CD4-positive, alpha-beta T cell (primary cell): ENCODE measurements at regions of chr11 and their contacts with region 1.

Region 1: DNA sequence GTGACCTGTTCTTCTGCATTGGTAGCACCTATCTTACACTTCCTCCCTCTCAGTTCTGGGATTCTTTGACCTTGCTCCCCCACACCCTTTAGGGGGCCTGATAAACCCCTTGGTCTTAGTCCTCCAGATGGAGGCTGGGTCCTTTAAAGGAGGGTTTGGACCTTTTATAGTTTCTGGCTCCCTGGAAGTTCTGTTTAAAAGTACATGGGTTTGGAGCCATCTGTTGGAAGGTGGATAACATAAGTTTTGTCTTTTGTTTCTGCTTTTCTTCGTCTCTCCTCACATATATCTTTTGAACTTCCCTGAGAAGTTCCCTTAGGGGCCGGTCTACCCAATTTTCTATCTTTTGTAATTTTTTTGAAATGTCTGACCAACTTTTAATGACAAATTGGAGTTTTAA is 17.9 kb upstream of the HYLS1 start:
- DNase-seq: no peak
- ATAC-seq: no peak
- H3K4me3 ChIP-seq: no peak overlapping the region
- H3K4me3 Mint-ChIP-seq: no peak overlapping the region
- H3K27ac ChIP-seq: no peak overlapping the region
- H3K27ac Mint-ChIP-seq: no peak overlapping the region
- H3K4me1 ChIP-seq: no peaks in the 10 kb centered on the region
- H3K4me1 Mint-ChIP-seq: no peaks in the 10 kb centered on the region
- H3K27me3 ChIP-seq: no peaks in the 10 kb centered on the region
- H3K27me3 Mint-ChIP-seq: peaks cover 10% of the 10 kb centered on the region
- CTCF ChIP-seq: no peak

Region 2: GRCh38 chr11:124970925-124971324 is 898.6 kb before region 1 on chr11:
- CTCF ChIA-PET with region 1: no interaction called
- POLR2A ChIA-PET with region 1: no interaction called
- intact Hi-C with region 1: loop called in 1 of 2 experiments (anchors 5 kb)
- DNase-seq: no peak
- ATAC-seq: no peak
- H3K4me3 ChIP-seq: no peak overlapping the region
- H3K4me3 Mint-ChIP-seq: no peak overlapping the region
- H3K27ac ChIP-seq: no peak overlapping the region
- H3K27ac Mint-ChIP-seq: no peak overlapping the region
- H3K4me1 ChIP-seq: no peaks in the 10 kb centered on the region
- H3K4me1 Mint-ChIP-seq: no peaks in the 10 kb centered on the region
- H3K27me3 ChIP-seq: no peaks in the 10 kb centered on the region
- H3K27me3 Mint-ChIP-seq: no peaks in the 10 kb centered on the region
- CTCF ChIP-seq: no peak

Region 3: GRCh38 chr11:125433454-125434121 is 435.9 kb before region 1 on chr11:
- CTCF ChIA-PET with region 1: no interaction called
- POLR2A ChIA-PET with region 1: no interaction called
- intact Hi-C with region 1: no loop called
- DNase-seq: peak in 1 of 14 experiments; percentile 8
- ATAC-seq: no peak
- H3K4me3 ChIP-seq: no peak overlapping the region
- H3K4me3 Mint-ChIP-seq: no peak overlapping the region
- H3K27ac ChIP-seq: no peak overlapping the region
- H3K27ac Mint-ChIP-seq: no peak overlapping the region
- H3K4me1 ChIP-seq: peaks cover 4% of the 10 kb centered on the region
- H3K4me1 Mint-ChIP-seq: no peaks in the 10 kb centered on the region
- H3K27me3 ChIP-seq: peaks cover 0 to 9% of the 10 kb centered on the region in 2 experiments
- H3K27me3 Mint-ChIP-seq: peaks cover 38% of the 10 kb centered on the region
- CTCF ChIP-seq: no peak

Region 4: DNA sequence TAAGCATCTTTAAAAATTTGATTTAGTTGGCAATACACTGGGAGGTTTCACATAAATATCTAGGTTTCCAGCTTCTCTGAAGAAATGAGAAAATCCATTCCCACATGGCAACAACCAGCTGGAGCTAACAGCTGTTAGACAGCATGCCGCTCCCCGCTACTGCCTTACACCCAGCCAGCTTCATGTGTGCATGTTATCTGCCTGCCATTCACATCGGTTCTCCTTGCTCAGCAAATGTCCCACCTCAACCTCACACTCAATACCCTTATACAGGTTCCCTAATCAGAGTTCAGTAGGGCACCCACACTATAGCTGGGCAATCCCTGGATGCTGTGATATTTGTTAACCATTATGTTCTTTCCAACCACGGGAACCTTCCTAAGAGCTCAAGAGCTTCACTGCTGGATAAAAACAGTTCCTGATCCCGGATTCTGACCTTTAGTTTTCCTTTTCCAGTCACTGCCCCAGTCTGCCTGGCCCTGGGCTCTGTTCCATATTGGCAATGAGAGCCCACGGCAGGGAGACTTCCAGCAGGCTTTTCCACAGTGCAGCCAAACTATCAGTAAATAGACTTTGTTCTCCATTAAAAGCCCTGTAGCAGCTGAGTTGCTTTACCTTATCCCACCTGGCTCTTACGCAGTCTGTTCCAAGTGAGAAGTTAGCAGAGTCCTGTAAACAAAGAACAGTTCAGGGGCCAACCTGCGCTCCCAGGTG is 333.3 kb after region 1 on chr11:
- CTCF ChIA-PET with region 1: no interaction called
- POLR2A ChIA-PET with region 1: no interaction called
- intact Hi-C with region 1: no loop called
- DNase-seq: no peak
- ATAC-seq: no peak
- H3K4me3 ChIP-seq: no peak overlapping the region
- H3K4me3 Mint-ChIP-seq: no peak overlapping the region
- H3K27ac ChIP-seq: no peak overlapping the region
- H3K27ac Mint-ChIP-seq: no peak overlapping the region
- H3K4me1 ChIP-seq: no peaks in the 10 kb centered on the region
- H3K4me1 Mint-ChIP-seq: no peaks in the 10 kb centered on the region
- H3K27me3 ChIP-seq: no peaks in the 10 kb centered on the region
- H3K27me3 Mint-ChIP-seq: no peaks in the 10 kb centered on the region
- CTCF ChIP-seq: no peak